ENCODE measurements at regions of chr18 and their contacts with region 1.

Region 1: GRCh38 chr18:57434536-57435494 is at the start of gene ONECUT2:
- DNase-seq: peak; percentile 97
- H3K4me3 ChIP-seq: peak within 1 kb of the TSS; percentile 71
- H3K27ac ChIP-seq: no peak within 1 kb of the TSS
- H3K4me1 ChIP-seq: peaks cover 6% of the 10 kb centered on the region
- H3K27me3 ChIP-seq: peaks cover 87% of the 10 kb centered on the region
- total RNA-seq, gene ONECUT2: not detected in 2 replicates

Region 2: GRCh38 chr18:56869189-56869777 is 565.5 kb before region 1 on chr18:
- in situ Hi-C with region 1: loop called (anchors 25 kb)
- DNase-seq: peak; percentile 84
- H3K4me3 ChIP-seq: no peak overlapping the region
- H3K27ac ChIP-seq: no peak overlapping the region
- H3K4me1 ChIP-seq: no peaks in the 10 kb centered on the region
- H3K27me3 ChIP-seq: no peaks in the 10 kb centered on the region

Region 3: GRCh38 chr18:57135699-57136098 is 299.1 kb before region 1 on chr18:
- in situ Hi-C with region 1: no loop called
- DNase-seq: no peak
- H3K4me3 ChIP-seq: no peak overlapping the region
- H3K27ac ChIP-seq: no peak overlapping the region
- H3K4me1 ChIP-seq: no peaks in the 10 kb centered on the region
- H3K27me3 ChIP-seq: no peaks in the 10 kb centered on the region

Region 4: DNA sequence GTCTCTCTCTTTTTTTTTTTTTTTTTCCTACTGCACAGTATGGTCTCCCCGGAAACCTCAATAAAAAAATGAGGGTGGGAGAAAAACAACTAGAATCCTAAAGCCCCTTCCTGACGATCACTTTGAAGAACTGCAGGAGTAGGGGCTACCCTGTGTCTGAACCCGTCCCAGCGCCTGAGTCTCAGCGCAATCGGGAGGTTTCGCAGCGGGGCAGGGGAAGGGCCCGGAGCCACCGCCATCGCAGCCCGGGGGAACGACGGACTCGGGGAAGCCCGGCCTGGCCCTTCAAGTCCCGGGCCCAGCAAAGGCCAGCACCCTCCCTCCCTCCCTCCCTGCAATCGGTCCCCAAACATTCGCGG is 186.4 kb after region 1 on chr18:
- in situ Hi-C with region 1: no loop called
- DNase-seq: peak; percentile 52
- H3K4me3 ChIP-seq: peak overlapping the region; percentile 84
- H3K27ac ChIP-seq: peak overlapping the region; percentile 62
- H3K4me1 ChIP-seq: peaks cover 17% of the 10 kb centered on the region
- H3K27me3 ChIP-seq: no peaks in the 10 kb centered on the region

Measured in GM23248 (cell line).